Heart left ventricle (tissue), 16 donors: ENCODE measurements at regions of chr1 and their contacts with region 1.

Region 1: DNA sequence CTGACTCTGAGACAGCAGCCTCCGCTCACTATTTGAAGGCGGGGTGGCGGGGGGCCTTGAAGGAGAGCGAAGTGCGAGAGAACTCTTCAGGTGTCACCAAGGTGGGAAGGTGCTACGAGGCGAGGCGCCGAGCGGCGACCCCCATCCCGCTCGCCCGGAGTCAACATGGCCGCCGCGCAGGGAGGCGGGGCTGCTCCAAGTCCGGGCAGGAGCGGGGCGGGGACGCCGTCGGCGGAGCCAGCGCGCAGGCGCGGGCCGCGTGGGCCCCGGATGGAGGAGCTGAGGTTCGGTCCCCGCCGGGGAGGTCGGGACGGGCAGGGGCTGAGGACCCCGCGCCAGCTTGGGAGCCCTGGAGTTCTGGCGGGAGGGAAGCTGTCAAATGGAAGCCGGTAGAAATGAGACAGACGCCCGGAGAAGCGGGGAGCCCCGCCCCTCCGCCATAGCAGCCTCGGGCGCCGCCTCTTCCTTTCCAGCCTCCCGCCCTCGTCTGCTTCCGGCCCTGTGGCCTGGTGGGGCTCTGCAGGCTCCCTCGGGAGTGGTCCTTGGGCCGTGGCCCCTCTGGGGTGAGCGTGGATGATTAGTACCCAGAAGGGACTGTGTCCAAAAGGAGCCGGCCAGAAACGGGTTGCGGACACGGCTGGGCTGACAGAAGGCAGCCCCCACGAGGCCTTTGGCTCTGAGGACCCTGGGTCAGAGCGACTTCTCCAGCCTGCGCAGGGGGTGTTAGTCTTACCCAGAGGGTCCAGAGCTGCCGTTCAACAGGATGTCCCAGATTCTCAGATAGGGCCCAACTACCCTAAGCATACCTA is at the start of gene PIGV:
- DNase-seq: peak; percentile 90 to 95 (median 90)
- ATAC-seq: peak; percentile 75 to 89 (median 87)
- H3K4me3 ChIP-seq: peak within 1 kb of the TSS; percentile 61 to 89 (median 75)
- H3K27ac ChIP-seq: peak within 1 kb of the TSS; percentile 96 to 100 (median 99)
- H3K4me1 ChIP-seq: peaks cover 12 to 81% (median 73%) of the 10 kb centered on the region in 12 donors
- H3K27me3 ChIP-seq: no peaks in the 10 kb centered on the region
- CTCF ChIP-seq: peak in 3 of 12 donors; percentile 6 to 32 (median 19)
- POLR2A ChIP-seq: peak in 1 of 2 donors; percentile 66
- total RNA-seq, gene PIGV: 4.3 to 8.8 (median 5.6) TPM

Region 2: DNA sequence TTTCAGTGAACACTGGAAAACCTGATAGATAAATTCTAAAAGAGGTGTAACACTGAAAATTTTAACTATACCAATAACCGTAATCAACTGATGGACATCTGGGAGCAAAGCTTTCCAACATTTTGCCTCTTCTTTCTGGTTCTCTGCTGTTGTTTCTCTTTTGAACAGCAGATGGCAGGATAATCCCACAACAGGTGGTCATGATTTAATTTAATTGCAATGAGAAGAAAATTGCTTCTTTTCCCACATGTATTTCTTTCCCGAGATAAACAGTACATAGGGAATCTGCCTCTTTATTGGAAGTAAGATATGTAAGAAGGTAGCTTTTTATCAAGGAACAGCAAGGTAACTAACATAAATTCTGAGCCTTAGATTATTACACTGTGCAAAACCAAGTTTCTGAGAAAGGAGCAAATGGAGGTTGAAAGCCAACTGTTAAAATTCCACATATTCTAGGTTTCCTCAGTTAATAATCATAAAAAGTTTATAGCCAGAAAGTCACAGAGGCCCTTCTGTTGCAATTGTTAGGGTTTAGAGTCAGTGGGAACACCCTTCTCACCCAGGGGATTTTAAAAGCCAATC is 185.4 kb before region 1 on chr1:
- intact Hi-C with region 1: loop called (anchors 1 to 2 kb)
- DNase-seq: peak in 2 of 5 donors; percentile 35 to 36
- ATAC-seq: peak in 2 of 4 donors; percentile 28 to 42
- H3K4me3 ChIP-seq: no peak overlapping the region
- H3K27ac ChIP-seq: no peak overlapping the region
- H3K4me1 ChIP-seq: peaks cover 0 to 23% (median 0%) of the 10 kb centered on the region in 12 donors
- H3K27me3 ChIP-seq: no peaks in the 10 kb centered on the region
- CTCF ChIP-seq: peak; percentile 79 to 95 (median 90)
- POLR2A ChIP-seq: no peak

Region 3: DNA sequence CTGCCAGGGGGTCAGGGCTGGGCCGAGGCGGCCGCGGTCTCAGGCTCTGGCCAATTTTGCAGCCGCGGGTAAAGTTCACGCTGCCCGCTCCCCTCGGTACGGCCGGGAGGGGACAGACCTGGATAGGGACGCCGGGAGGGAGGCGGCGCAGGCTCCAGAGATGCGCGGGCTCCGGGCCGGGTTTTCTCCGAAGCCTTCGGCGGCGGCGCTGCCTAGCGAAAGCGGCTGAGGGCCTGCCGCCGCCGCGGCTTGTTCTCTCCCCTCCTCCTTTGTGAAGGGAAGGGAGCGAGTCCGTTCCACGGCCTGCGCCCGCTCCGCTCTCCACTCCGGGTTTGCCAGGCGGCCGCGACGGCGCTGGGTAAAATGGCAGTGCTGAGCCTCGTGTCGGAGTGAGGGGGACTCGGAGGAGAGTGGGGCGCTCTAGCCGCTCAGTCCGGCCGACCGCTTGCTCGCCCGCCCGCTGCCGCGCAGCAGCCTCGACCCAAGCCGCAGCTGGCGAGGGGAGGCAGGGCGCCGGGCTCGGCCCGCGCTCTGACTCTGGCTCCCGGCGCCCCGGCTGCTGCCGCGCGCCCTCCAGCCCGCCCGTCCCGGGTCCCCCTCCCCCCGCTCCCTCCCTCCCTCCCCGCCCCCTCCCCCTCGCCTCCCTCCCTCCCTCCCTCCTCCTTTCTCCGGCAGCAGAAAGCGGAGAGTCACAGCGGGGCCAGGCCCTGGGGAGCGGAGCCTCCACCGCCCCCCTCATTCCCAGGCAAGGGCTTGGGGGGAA is 92.4 kb before region 1 on chr1 and contains the start of gene ARID1A:
- intact Hi-C with region 1: loop called (anchors 1 to 5 kb)
- DNase-seq: peak; percentile 96 to 99 (median 96)
- ATAC-seq: peak; percentile 65 to 79 (median 74)
- H3K4me3 ChIP-seq: peak within 1 kb of the TSS; percentile 80 to 96 (median 92)
- H3K27ac ChIP-seq: peak within 1 kb of the TSS; percentile 89 to 98 (median 96)
- H3K4me1 ChIP-seq: peaks cover 16 to 59% (median 49%) of the 10 kb centered on the region in 12 donors
- H3K27me3 ChIP-seq: peaks cover 0 to 4% (median 0%) of the 10 kb centered on the region in 9 donors
- CTCF ChIP-seq: peak in 4 of 12 donors; percentile 8 to 27 (median 14)
- POLR2A ChIP-seq: peak in 1 of 2 donors; percentile 61
- total RNA-seq, gene ARID1A: 29.0 to 73.9 (median 49.9) TPM

Region 4: DNA sequence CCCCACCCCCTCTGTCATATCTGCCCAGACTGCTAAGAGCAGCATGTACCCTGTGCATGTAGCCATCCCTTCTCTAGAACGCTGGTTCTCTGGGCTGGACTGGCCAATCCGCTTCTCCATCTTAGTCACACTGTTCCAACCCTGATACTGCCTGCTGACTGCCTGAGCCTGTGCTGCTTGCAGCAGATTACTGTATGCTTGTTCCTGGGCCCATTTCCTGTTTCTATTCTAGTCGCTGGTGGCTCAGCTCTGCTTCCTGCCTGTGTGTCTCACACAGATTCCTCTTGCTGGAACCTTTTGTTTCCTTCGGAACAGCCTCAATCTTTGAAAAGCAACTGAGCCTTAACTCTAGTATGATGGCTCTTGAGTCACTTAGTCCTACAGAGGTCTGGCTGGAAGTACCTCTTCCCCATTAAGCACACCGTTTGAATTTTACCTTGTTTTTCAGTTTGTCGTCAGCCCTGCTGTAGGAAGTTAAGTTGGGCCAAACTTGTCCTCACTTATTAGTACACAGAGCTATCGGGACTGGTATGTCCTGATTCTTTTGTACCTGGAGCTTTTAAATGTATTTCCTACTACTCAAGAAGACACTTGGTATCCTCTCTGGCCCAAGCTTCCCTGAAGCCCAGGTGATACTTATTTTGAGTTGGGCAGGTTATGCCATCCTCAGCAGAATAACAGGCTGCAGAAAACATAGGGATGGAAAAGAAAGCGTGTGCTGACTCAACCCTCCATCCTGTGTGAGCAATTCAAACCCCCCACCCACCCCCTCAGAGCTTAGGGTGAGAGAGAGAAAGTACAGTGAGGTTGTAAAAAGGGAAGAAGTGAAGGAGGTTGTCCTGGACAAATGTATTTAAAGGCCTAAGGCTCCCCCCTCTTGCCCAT is 43.6 kb before region 1 on chr1:
- intact Hi-C with region 1: loop called in 4 of 10 experiments (anchors 1 to 5 kb)
- DNase-seq: peak; percentile 82 to 92 (median 87)
- ATAC-seq: peak; percentile 96 to 99 (median 98)
- H3K4me3 ChIP-seq: peak overlapping the region in 4 of 12 donors; percentile 6 to 40 (median 7)
- H3K27ac ChIP-seq: peak overlapping the region; percentile 75 to 94 (median 78)
- H3K4me1 ChIP-seq: peaks cover 11 to 99% (median 57%) of the 10 kb centered on the region in 12 donors
- H3K27me3 ChIP-seq: no peaks in the 10 kb centered on the region
- CTCF ChIP-seq: no peak
- POLR2A ChIP-seq: peak in 1 of 2 donors; percentile 44